Activated T-helper 2 cell treated with anti-CD3 and anti-CD28 coated beads, Interferon-gamma antibody, Interleukin-2, Interleukin-4, amounts not matched to agents 10 μg/mL and 5 μg/mL and 100 μg/mL, durations not matched to agents 14 hours and 24 hours and 36 hours (primary cell): ENCODE measurements at regions of chr14 and their contacts with region 1.

Region 1: DNA sequence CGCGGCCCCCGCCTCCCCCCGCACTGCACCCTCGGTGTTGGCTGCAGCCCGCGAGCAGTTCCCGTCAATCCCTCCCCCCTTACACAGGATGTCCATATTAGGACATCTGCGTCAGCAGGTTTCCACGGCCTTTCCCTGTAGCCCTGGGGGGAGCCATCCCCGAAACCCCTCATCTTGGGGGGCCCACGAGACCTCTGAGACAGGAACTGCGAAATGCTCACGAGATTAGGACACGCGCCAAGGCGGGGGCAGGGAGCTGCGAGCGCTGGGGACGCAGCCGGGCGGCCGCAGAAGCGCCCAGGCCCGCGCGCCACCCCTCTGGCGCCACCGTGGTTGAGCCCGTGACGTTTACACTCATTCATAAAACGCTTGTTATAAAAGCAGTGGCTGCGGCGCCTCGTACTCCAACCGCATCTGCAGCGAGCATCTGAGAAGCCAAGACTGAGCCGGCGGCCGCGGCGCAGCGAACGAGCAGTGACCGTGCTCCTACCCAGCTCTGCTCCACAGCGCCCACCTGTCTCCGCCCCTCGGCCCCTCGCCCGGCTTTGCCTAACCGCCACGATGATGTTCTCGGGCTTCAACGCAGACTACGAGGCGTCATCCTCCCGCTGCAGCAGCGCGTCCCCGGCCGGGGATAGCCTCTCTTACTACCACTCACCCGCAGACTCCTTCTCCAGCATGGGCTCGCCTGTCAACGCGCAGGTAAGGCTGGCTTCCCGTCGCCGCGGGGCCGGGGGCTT is at the start of gene FOS:
- DNase-seq: peak; percentile 87
- H3K4me3 Mint-ChIP-seq: peak within 1 kb of the TSS; percentile 95
- H3K27ac Mint-ChIP-seq: peak within 1 kb of the TSS; percentile 97
- H3K4me1 Mint-ChIP-seq: peaks cover 35% of the 10 kb centered on the region
- H3K27me3 Mint-ChIP-seq: peaks cover 55% of the 10 kb centered on the region
- total RNA-seq, gene FOS: 24.7 and 27.8 TPM in 2 replicates

Region 2: GRCh38 chr14:75158843-75159614 is 119.6 kb before region 1 on chr14:
- intact Hi-C with region 1: loop called (anchors 5 kb)
- DNase-seq: no peak
- H3K4me3 Mint-ChIP-seq: no peak overlapping the region
- H3K27ac Mint-ChIP-seq: peak overlapping the region; percentile 42
- H3K4me1 Mint-ChIP-seq: peaks cover 57% of the 10 kb centered on the region
- H3K27me3 Mint-ChIP-seq: no peaks in the 10 kb centered on the region

Region 3: DNA sequence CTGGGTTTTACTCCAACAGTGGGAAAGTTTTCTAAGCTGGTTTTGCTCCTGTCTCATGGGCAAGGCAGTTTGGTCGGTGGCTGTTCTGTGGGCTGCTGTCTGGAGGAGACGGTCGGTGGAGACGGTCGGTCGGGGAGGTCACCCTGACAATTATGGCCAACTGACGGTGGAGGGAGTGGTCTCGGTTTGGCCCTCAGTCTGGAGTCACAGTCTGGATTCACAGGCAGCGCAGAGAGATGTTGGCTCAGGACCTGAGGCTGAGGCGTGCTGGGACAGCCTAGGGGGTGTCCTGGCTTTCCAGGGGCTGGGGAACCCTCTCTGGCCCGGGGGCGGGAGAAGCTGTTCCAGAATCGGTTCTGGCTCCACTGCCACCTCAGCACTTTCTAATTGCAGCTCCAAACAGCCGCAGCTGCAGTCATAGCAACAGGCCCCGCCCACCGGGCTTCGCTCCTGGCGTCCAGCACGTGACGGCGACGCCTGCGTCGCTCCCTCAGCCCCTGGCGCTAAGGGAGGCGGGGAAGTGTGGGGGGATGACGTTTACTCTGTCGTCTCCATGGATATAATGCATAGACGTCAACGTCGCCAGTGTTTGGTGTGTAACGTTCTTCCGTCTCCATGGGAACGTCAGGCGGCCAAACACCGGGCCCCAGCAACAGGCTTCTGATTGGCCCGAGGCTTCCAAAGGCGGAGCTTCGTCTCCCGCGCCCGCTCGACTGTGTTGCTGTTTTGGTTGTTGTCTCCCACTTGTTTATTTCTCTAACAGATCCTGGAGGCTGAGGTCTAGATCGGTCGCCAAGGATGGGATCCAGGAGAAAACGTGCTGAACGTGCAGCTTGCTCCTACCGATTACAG is 19.8 kb before region 1 on chr14:
- intact Hi-C with region 1: loop called (anchors 1 kb)
- DNase-seq: peak; percentile 99
- H3K4me3 Mint-ChIP-seq: peak overlapping the region; percentile 75
- H3K27ac Mint-ChIP-seq: peak overlapping the region; percentile 96
- H3K4me1 Mint-ChIP-seq: peaks cover 30% of the 10 kb centered on the region
- H3K27me3 Mint-ChIP-seq: peaks cover 56% of the 10 kb centered on the region